ENCODE measurements at regions of chr7 and their contacts with region 1.

Region 1: DNA sequence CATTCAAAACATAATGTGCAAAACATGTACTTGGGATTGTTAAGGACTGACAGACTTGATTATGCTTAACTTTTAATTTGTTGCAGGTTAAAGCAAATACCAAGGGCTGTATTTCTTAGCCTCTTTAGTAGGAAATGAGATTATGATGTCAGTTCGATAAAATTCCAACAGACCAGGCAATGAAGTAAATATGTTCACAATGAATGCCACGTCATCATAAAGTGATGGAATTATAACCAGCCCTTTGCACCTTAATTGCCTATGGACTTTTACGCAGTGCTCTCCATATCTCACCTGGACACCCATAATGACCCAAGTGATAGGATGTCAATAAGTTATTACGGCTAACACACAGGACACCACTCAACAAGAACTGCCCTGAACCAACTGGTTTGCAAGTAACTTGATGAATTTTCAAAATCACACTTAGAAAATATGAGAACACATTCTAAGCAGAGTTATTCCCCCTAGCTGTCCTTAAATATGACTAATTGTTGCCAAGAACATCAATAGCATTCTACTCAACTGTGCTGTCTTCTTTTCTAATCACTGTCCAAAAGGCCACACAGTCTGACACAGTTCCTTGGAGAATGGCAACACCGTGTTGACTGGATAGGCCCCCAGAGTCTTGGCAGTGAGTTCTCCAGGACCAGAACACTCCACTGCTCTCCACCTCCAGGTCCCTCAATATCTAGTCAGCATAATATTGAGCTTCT is 115.0 kb downstream of the CHCHD3 start:
- DNase-seq: no peak
- ATAC-seq: no peak
- H3K4me3 ChIP-seq: no peak overlapping the region
- H3K4me3 Mint-ChIP-seq: no peak overlapping the region
- H3K27ac ChIP-seq: no peak overlapping the region
- H3K27ac Mint-ChIP-seq: no peak overlapping the region
- H3K4me1 ChIP-seq: peaks cover 0 to 4% of the 10 kb centered on the region in 2 donors
- H3K4me1 Mint-ChIP-seq: peaks cover 13% of the 10 kb centered on the region
- H3K27me3 ChIP-seq: no peaks in the 10 kb centered on the region
- H3K27me3 Mint-ChIP-seq: no peaks in the 10 kb centered on the region
- CTCF ChIP-seq: no peak

Region 2: GRCh38 chr7:132991615-132992587 is 25.0 kb after region 1 on chr7:
- CTCF ChIA-PET with region 1: no interaction called
- POLR2A ChIA-PET with region 1: interaction called, 13 read pairs
- intact Hi-C with region 1: no loop called
- DNase-seq: no peak
- ATAC-seq: no peak
- H3K4me3 ChIP-seq: no peak overlapping the region
- H3K4me3 Mint-ChIP-seq: no peak overlapping the region
- H3K27ac ChIP-seq: no peak overlapping the region
- H3K27ac Mint-ChIP-seq: no peak overlapping the region
- H3K4me1 ChIP-seq: no peaks in the 10 kb centered on the region
- H3K4me1 Mint-ChIP-seq: peaks cover 11% of the 10 kb centered on the region
- H3K27me3 ChIP-seq: no peaks in the 10 kb centered on the region
- H3K27me3 Mint-ChIP-seq: no peaks in the 10 kb centered on the region
- CTCF ChIP-seq: no peak

Measured in B cell (primary cell).